ENCODE measurements at regions of chr1 and their contacts with region 1.

Region 1: DNA sequence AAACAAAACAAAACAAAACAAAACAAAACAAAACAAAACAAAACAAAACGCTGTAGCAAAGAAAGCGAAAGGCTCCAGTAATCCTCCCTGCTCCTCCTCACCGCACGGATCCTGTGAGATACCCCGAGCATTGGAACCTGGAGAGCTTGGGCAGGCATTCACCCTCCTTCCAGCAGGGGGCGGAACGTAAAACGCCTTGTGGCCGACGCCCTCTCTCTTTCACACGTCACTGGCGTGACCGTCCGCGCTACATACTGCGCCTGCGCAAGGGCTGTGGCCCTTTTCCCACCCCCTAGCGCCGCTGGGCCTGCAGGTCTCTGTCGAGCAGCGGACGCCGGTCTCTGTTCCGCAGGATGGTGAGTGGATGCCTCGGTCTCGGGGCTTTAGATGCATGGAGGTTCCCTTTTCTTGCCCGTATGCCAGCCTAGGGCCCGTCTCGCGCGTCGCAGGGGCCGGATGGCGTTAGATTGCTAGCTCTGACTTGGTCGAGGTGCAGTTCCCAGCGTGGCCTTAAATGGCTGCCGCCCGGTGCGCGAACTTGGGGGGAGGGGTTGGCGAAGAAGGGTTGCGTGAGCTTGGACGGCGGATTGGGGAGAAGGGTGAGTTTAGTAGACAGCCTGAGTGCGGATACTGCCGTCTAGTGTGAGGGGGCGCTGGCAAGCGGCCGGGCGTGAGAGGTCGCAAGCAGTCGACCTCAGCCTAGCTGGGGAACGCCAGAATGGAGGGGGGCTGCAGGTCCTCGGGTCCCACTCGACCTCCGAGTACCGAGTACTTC is at the start of gene RPL5:
- DNase-seq: peak; percentile 96 to 99 (median 97)
- ATAC-seq: peak; percentile 90
- H3K4me3 ChIP-seq: peak within 1 kb of the TSS; percentile 91
- H3K27ac ChIP-seq: peak within 1 kb of the TSS; percentile 89
- H3K4me1 ChIP-seq: peaks cover 6 to 18% of the 10 kb centered on the region in 2 experiments; a peak in 3 of 5 replicates
- H3K27me3 ChIP-seq: no peaks in the 10 kb centered on the region
- CTCF ChIP-seq: peak; percentile 93 to 98 (median 97)
- EP300 ChIP-seq: peak; percentile 48; the same call in 1 of the 2 replicates
- POLR2A ChIP-seq: peak; percentile 100
- RAD21 ChIP-seq: peak; percentile 39; a peak in 3 of 4 replicates
- polyA plus RNA-seq, gene RPL5: 4,024 to 4,252 TPM

Region 2: GRCh38 chr1:92310185-92310597 is 521.8 kb before region 1 on chr1:
- CTCF ChIA-PET with region 1: no interaction called
- POLR2A ChIA-PET with region 1: interaction called, 3 read pairs
- in situ Hi-C with region 1: no loop called
- intact Hi-C with region 1: loop called (anchors 10 kb)
- DNase-seq: peak in 2 of 4 experiments; percentile 32 to 42
- ATAC-seq: peak; percentile 80
- H3K4me3 ChIP-seq: no peak overlapping the region
- H3K27ac ChIP-seq: no peak overlapping the region
- H3K4me1 ChIP-seq: no peaks in the 10 kb centered on the region
- H3K27me3 ChIP-seq: no peaks in the 10 kb centered on the region
- CTCF ChIP-seq: peak in 2 of 3 experiments; percentile 38 to 71; a peak in 3 of 6 replicates
- EP300 ChIP-seq: no peak
- POLR2A ChIP-seq: no peak
- RAD21 ChIP-seq: peak; percentile 82 to 88

Region 3: GRCh38 chr1:92583821-92584760 is 247.9 kb before region 1 on chr1:
- CTCF ChIA-PET with region 1: no interaction called
- POLR2A ChIA-PET with region 1: no interaction called
- in situ Hi-C with region 1: no loop called
- intact Hi-C with region 1: no loop called
- DNase-seq: no peak
- ATAC-seq: no peak
- H3K4me3 ChIP-seq: no peak overlapping the region
- H3K27ac ChIP-seq: no peak overlapping the region
- H3K4me1 ChIP-seq: no peaks in the 10 kb centered on the region
- H3K27me3 ChIP-seq: no peaks in the 10 kb centered on the region
- CTCF ChIP-seq: no peak
- EP300 ChIP-seq: no peak
- POLR2A ChIP-seq: no peak
- RAD21 ChIP-seq: no peak

Region 4: GRCh38 chr1:92784639-92785500 is 47.1 kb before region 1 on chr1 and contains the start of gene EVI5:
- CTCF ChIA-PET with region 1: no interaction called
- POLR2A ChIA-PET with region 1: interaction called, 14 read pairs
- in situ Hi-C with region 1: no loop called
- intact Hi-C with region 1: loop called (anchors 5 kb)
- DNase-seq: peak; percentile 87 to 96 (median 92)
- ATAC-seq: peak; percentile 97
- H3K4me3 ChIP-seq: peak within 1 kb of the TSS; percentile 96
- H3K27ac ChIP-seq: peak within 1 kb of the TSS; percentile 88
- H3K4me1 ChIP-seq: peaks cover 13 to 24% of the 10 kb centered on the region in 2 experiments; a peak in 4 of 5 replicates
- H3K27me3 ChIP-seq: no peaks in the 10 kb centered on the region
- CTCF ChIP-seq: 0 out of 6 replicates have a peak, but pooled peaks of 2 of the 3 experiments have one; percentile 25 to 45
- EP300 ChIP-seq: no peak
- POLR2A ChIP-seq: peak; percentile 82
- RAD21 ChIP-seq: no peak
- polyA plus RNA-seq, gene EVI5: 1.7 to 4.8 TPM

Region 5: GRCh38 chr1:92797961-92798360 is 34.0 kb before region 1 on chr1:
- CTCF ChIA-PET with region 1: no interaction called
- POLR2A ChIA-PET with region 1: interaction called, 12 read pairs
- in situ Hi-C with region 1: no loop called
- intact Hi-C with region 1: no loop called
- DNase-seq: no peak
- ATAC-seq: no peak
- H3K4me3 ChIP-seq: no peak overlapping the region
- H3K27ac ChIP-seq: no peak overlapping the region
- H3K4me1 ChIP-seq: peaks cover under 1 to 2% of the 10 kb centered on the region in 2 experiments; a peak in 3 of 5 replicates
- H3K27me3 ChIP-seq: no peaks in the 10 kb centered on the region
- CTCF ChIP-seq: no peak
- EP300 ChIP-seq: no peak
- POLR2A ChIP-seq: no peak
- RAD21 ChIP-seq: no peak

Region 6: GRCh38 chr1:92843429-92844352 is 11.7 kb after region 1 on chr1:
- CTCF ChIA-PET with region 1: no interaction called
- POLR2A ChIA-PET with region 1: interaction called, 26 read pairs
- in situ Hi-C with region 1: no loop called
- intact Hi-C with region 1: no loop called
- DNase-seq: no peak
- ATAC-seq: peak; percentile 54
- H3K4me3 ChIP-seq: no peak overlapping the region
- H3K27ac ChIP-seq: no peak overlapping the region; the same call in 2 of the 3 replicates
- H3K4me1 ChIP-seq: no peaks in the 10 kb centered on the region
- H3K27me3 ChIP-seq: no peaks in the 10 kb centered on the region
- CTCF ChIP-seq: no peak
- EP300 ChIP-seq: no peak
- POLR2A ChIP-seq: 0 out of 2 replicates have a peak, but pooled peaks have one; percentile 6
- RAD21 ChIP-seq: no peak

Region 7: DNA sequence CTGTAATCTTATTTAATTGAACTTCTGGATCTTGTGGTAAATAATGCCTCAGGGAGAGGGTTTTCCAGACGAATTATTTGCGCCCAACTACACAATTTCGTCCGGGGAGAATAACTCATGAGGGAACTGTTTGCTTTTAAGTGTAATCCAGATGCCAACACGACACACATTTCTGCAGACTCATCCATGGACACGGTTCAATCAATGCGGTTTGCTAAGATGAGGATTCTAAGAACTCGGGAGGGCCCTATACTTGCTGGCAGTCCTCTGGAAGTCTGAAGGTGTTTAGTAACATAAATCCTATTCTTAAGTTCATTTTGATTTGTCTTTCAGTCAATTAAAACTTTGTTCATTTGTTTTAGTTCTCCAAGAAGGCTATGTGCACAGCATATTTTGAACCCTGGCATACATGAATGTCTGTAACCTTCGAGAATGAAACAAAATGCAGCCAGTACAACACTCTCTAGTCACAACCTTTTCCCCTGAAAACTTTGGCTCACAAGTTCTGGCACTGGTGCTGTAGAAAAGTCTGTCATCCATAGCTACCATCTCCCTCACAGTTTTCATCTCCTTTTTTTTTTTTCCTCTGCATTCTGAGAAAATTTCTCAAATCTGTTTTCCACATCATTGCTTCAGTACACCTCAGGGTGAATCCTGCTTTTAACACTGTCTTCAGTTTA is 90.5 kb after region 1 on chr1:
- CTCF ChIA-PET with region 1: no interaction called
- POLR2A ChIA-PET with region 1: no interaction called
- in situ Hi-C with region 1: no loop called
- intact Hi-C with region 1: no loop called
- DNase-seq: peak in 2 of 4 experiments; percentile 75 to 81
- ATAC-seq: peak; percentile 91
- H3K4me3 ChIP-seq: no peak overlapping the region
- H3K27ac ChIP-seq: no peak overlapping the region
- H3K4me1 ChIP-seq: peaks cover 3 to 15% of the 10 kb centered on the region in 2 experiments; a peak in 3 of 5 replicates
- H3K27me3 ChIP-seq: no peaks in the 10 kb centered on the region
- CTCF ChIP-seq: no peak
- EP300 ChIP-seq: peak; percentile 33
- POLR2A ChIP-seq: no peak
- RAD21 ChIP-seq: no peak

Region 8: DNA sequence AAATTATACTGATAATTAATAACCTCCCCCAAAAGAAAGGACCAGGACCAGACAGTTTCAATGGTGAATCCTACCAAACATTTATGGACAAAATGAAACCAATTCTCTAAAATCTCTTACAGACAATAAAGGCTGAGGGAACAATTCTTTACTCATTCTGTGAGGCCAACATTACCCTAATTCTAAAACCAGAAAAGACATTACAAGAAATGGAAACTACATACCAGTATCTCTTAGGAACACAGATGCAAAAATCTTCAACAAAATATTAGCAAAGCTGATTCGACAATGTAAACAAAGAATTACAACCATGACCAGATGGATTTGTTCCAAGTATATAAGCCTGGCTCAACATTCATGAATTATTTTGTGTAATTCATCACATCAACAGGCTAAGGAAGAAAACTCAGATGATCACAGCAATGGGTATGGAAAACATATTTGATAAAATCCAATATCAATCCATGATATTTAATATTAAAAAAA is 339.6 kb after region 1 on chr1:
- CTCF ChIA-PET with region 1: no interaction called
- POLR2A ChIA-PET with region 1: no interaction called
- in situ Hi-C with region 1: no loop called
- intact Hi-C with region 1: no loop called
- DNase-seq: no peak
- ATAC-seq: no peak
- H3K4me3 ChIP-seq: no peak overlapping the region
- H3K27ac ChIP-seq: no peak overlapping the region
- H3K4me1 ChIP-seq: peaks cover 1 to 3% of the 10 kb centered on the region in 2 experiments; a peak in 2 of 5 replicates
- H3K27me3 ChIP-seq: no peaks in the 10 kb centered on the region
- CTCF ChIP-seq: no peak
- EP300 ChIP-seq: no peak
- POLR2A ChIP-seq: no peak
- RAD21 ChIP-seq: no peak